ENCODE measurements at regions of chr7 and their contacts with region 1.

Region 1: GRCh38 chr7:142587578-142588191 is 161.6 kb upstream of the PRSS1 start:
- DNase-seq: peak; percentile 50
- H3K4me3 Mint-ChIP-seq: no peak overlapping the region
- H3K27ac Mint-ChIP-seq: no peak overlapping the region
- H3K4me1 Mint-ChIP-seq: peaks cover 43% of the 10 kb centered on the region
- H3K27me3 Mint-ChIP-seq: no peaks in the 10 kb centered on the region
- CTCF ChIP-seq: peak; percentile 71

Region 2: DNA sequence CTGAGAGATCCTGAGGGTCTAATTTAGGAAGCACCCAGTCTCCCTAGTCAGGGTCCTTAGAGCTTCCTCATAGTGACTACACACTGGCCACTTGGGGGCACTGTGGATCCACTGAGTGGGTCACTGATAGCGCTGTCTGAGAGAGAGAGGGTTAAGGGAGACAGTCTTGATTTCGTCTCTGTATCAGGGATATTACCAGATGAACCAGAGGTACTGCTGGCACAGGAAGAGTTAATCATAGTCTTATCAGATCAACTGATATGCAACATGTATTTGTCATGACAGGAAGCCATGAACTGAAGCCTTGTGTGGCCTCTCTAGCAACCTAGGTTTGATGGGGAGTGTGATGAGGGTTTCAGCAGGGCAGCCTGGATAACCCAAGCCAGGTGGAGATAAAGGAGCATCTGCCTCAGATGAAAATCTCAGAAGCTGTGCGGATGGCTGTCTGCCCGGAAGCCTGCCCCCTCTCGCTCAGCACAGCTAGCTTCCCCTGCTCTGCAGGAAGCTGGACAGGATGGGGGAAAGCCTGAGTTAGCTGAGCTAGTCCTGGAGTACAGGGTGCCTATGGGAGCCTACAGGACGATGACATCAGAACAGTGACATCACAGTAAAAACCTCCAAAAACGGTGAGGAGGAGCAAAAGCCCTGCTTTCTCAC is 52.4 kb before region 1 on chr7:
- CTCF ChIA-PET with region 1: interaction called, 45 read pairs
- intact Hi-C with region 1: loop called (anchors 1 kb)
- DNase-seq: peak; percentile 82
- H3K4me3 Mint-ChIP-seq: no peak overlapping the region
- H3K27ac Mint-ChIP-seq: no peak overlapping the region
- H3K4me1 Mint-ChIP-seq: peaks cover 15% of the 10 kb centered on the region
- H3K27me3 Mint-ChIP-seq: peaks cover 12% of the 10 kb centered on the region
- CTCF ChIP-seq: peak; percentile 81

Region 3: GRCh38 chr7:142557971-142558582 is 29.6 kb before region 1 on chr7:
- CTCF ChIA-PET with region 1: interaction called, 22 read pairs
- intact Hi-C with region 1: loop called (anchors 2 kb)
- DNase-seq: peak; percentile 52
- H3K4me3 Mint-ChIP-seq: no peak overlapping the region
- H3K27ac Mint-ChIP-seq: no peak overlapping the region
- H3K4me1 Mint-ChIP-seq: peaks cover 53% of the 10 kb centered on the region
- H3K27me3 Mint-ChIP-seq: no peaks in the 10 kb centered on the region
- CTCF ChIP-seq: peak; percentile 49

Region 4: GRCh38 chr7:142598297-142598696 is 10.6 kb after region 1 on chr7:
- CTCF ChIA-PET with region 1: interaction called, 15 read pairs
- intact Hi-C with region 1: no loop called
- DNase-seq: no peak
- H3K4me3 Mint-ChIP-seq: no peak overlapping the region
- H3K27ac Mint-ChIP-seq: no peak overlapping the region
- H3K4me1 Mint-ChIP-seq: peaks cover 6% of the 10 kb centered on the region
- H3K27me3 Mint-ChIP-seq: peaks cover 73% of the 10 kb centered on the region
- CTCF ChIP-seq: no peak

Region 5: DNA sequence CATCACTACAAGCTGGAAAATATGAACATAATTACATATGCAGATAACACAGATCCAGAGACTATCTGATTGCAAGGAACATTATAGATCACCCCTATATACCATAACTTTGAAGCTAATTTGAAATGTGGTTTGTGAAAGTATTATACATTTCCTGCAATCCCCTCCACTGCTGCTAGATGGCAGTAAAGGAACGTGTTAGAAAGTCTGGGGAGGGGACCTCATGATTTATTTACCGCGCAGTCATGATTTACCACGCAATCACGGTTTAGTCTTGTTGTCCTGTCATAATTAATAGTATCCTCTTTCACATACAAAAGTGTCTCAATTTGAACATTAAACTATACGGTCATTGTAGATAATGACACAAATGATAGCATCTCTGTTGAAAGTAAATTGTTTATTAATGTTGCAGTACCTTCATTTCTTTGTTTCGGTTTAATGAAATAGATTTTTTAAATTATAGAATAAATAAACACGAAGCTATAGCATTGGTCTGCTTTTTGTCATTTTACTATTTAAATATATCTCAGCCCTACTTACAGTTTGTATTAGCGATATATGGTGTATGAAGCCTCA is 16.3 kb after region 1 on chr7:
- CTCF ChIA-PET with region 1: interaction called, 15 read pairs
- intact Hi-C with region 1: no loop called
- DNase-seq: peak; percentile 58
- H3K4me3 Mint-ChIP-seq: no peak overlapping the region
- H3K27ac Mint-ChIP-seq: no peak overlapping the region
- H3K4me1 Mint-ChIP-seq: no peaks in the 10 kb centered on the region
- H3K27me3 Mint-ChIP-seq: peaks cover 65% of the 10 kb centered on the region
- CTCF ChIP-seq: peak; percentile 47

Region 6: GRCh38 chr7:142632291-142633134 is 44.8 kb after region 1 on chr7:
- CTCF ChIA-PET with region 1: no interaction called
- intact Hi-C with region 1: no loop called
- DNase-seq: peak; percentile 70
- H3K4me3 Mint-ChIP-seq: no peak overlapping the region
- H3K27ac Mint-ChIP-seq: no peak overlapping the region
- H3K4me1 Mint-ChIP-seq: no peaks in the 10 kb centered on the region
- H3K27me3 Mint-ChIP-seq: peaks cover 56% of the 10 kb centered on the region
- CTCF ChIP-seq: peak; percentile 39

Measured in Calu3 (cell line).